ENCODE measurements at regions of chr15 and their contacts with region 1.

Region 1: DNA sequence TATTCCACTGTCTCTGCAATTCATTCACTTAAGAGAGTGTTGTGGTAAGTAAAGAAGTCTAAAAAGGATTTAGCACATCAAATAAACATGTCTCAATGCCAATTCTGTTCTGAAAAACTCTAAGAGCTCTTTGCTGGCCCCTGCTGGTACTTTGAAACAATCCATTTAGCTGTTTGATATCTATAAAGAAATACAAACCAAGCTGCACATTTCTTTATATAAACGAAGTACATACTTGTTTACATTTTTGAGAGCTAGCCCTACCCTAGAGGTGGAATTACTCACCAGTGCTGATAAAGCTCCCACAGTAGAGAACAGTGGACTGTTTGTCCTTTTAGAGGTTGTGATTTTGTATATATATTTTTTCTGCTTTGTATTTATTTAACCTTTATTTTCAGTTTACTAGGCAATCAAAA is 75.5 kb downstream of the NEDD4 start:
- DNase-seq: peak; percentile 92
- H3K4me3 ChIP-seq: no peak overlapping the region
- H3K27ac ChIP-seq: no peak overlapping the region
- H3K4me1 ChIP-seq: peaks cover 15% of the 10 kb centered on the region
- H3K27me3 ChIP-seq: no peaks in the 10 kb centered on the region
- CTCF ChIP-seq: peak; percentile 39 to 53
- POLR2A ChIP-seq: no peak

Region 2: GRCh38 chr15:55694652-55695150 is 223.2 kb before region 1 on chr15:
- CTCF ChIA-PET with region 1: no interaction called
- POLR2A ChIA-PET with region 1: no interaction called
- dilution Hi-C with region 1: no loop called
- intact Hi-C with region 1: no loop called
- DNase-seq: peak; percentile 28
- H3K4me3 ChIP-seq: no peak overlapping the region
- H3K27ac ChIP-seq: no peak overlapping the region
- H3K4me1 ChIP-seq: no peaks in the 10 kb centered on the region
- H3K27me3 ChIP-seq: no peaks in the 10 kb centered on the region
- CTCF ChIP-seq: no peak
- POLR2A ChIP-seq: no peak

Region 3: DNA sequence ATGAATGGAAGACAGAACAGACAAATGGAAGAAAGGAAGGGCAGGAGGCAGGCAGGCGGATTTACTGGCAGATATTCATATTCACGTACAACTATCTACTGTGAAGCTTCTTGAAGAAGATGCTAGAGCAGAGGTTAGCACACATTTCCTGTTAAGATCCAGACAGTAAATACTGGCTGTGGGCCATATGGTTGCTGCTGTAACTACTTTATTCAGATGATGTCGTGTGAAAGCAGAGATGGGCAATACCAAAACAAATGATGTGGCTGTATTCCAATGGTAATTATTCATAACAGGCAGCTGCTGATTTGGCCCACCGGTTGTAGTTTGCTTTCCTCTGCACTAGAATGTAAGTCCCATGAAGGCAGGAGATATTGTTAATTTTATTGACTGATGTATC is 59.2 kb before region 1 on chr15:
- CTCF ChIA-PET with region 1: interaction called, 18 read pairs
- POLR2A ChIA-PET with region 1: no interaction called
- dilution Hi-C with region 1: no loop called
- intact Hi-C with region 1: no loop called
- DNase-seq: no peak
- H3K4me3 ChIP-seq: no peak overlapping the region
- H3K27ac ChIP-seq: no peak overlapping the region
- H3K4me1 ChIP-seq: peaks cover 11% of the 10 kb centered on the region
- H3K27me3 ChIP-seq: no peaks in the 10 kb centered on the region
- CTCF ChIP-seq: no peak
- POLR2A ChIP-seq: no peak

Region 4: GRCh38 chr15:55873024-55873745 is 44.7 kb before region 1 on chr15:
- CTCF ChIA-PET with region 1: interaction called, 14 read pairs
- POLR2A ChIA-PET with region 1: no interaction called
- dilution Hi-C with region 1: no loop called
- intact Hi-C with region 1: no loop called
- DNase-seq: peak; percentile 84
- H3K4me3 ChIP-seq: peak overlapping the region; percentile 10 to 78 (median 16)
- H3K27ac ChIP-seq: peak overlapping the region; percentile 89
- H3K4me1 ChIP-seq: peaks cover 23% of the 10 kb centered on the region
- H3K27me3 ChIP-seq: no peaks in the 10 kb centered on the region
- CTCF ChIP-seq: no peak
- POLR2A ChIP-seq: peak; percentile 47

Region 5: DNA sequence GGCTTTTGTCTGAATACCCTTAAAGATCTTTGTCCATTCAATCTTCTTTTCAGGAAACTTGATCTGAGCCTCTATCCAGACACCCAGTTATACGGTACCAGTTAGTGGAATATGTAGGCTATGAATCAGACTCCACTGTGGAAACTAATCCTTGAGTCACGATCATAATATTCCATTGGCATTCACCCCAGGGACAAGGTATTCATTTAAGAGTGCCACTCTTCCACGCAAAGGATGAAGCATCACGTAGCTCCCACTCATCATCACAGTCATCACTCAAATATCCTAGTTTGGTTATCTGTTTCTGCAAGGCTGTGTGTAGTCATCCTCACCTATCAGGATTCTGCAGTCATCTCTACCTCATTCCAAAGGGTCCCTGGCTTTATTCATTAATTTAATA is 10.1 kb before region 1 on chr15:
- CTCF ChIA-PET with region 1: interaction called, 109 read pairs
- POLR2A ChIA-PET with region 1: no interaction called
- dilution Hi-C with region 1: no loop called
- intact Hi-C with region 1: no loop called
- DNase-seq: peak; percentile 76
- H3K4me3 ChIP-seq: no peak overlapping the region
- H3K27ac ChIP-seq: peak overlapping the region; percentile 41
- H3K4me1 ChIP-seq: peaks cover 14% of the 10 kb centered on the region
- H3K27me3 ChIP-seq: no peaks in the 10 kb centered on the region
- CTCF ChIP-seq: no peak
- POLR2A ChIP-seq: no peak

Region 6: GRCh38 chr15:56052395-56053045 is 134.6 kb after region 1 on chr15:
- CTCF ChIA-PET with region 1: interaction called, 17 read pairs
- POLR2A ChIA-PET with region 1: no interaction called
- dilution Hi-C with region 1: no loop called
- intact Hi-C with region 1: loop called (anchors 1 kb)
- DNase-seq: peak; percentile 56
- H3K4me3 ChIP-seq: no peak overlapping the region
- H3K27ac ChIP-seq: no peak overlapping the region
- H3K4me1 ChIP-seq: peaks cover 3% of the 10 kb centered on the region
- H3K27me3 ChIP-seq: no peaks in the 10 kb centered on the region
- CTCF ChIP-seq: peak; percentile 40 to 60
- POLR2A ChIP-seq: no peak